GM10248 (cell line): ENCODE measurements at regions of chr11 and their contacts with region 1.

Region 1: DNA sequence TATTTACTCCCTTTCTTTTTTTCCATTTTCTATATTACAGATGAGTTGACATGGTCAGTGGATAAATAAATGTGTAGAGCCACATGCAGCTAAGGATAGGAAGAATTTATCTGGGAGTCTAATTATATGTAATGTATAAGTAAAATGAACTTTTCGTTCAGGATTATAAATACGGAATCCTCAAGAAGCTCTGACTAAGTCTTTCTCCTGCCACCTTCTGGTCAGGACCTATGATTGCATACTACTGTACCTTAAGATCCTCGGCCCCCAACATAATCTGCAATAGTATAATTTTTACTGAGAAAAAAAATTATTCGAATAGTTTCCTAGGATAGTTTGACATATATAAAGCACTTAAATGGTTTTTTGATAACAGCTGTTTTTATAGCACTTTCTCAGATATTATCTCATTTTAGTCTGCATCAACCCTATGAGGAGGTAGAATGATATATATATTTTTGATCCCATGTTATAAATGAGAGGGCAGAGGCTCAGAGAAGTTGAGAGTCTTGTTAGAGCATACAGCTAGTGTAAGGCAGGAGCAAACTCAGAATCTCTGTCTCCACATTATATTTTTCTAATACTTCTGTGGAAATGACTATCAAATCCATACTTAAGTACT is 36.1 kb downstream of the CCDC90B start:
- DNase-seq: peak; percentile 36
- CTCF ChIP-seq: peak; percentile 68

Region 2: GRCh38 chr11:82900277-82901164 is 349.6 kb before region 1 on chr11 and contains the start of gene PRCP:
- CTCF ChIA-PET with region 1: interaction called, 18 read pairs
- POLR2A ChIA-PET with region 1: no interaction called
- DNase-seq: peak; percentile 94
- CTCF ChIP-seq: no peak

Region 3: GRCh38 chr11:83205608-83206185 is 44.4 kb before region 1 on chr11:
- CTCF ChIA-PET with region 1: interaction called, 10 read pairs
- POLR2A ChIA-PET with region 1: no interaction called
- DNase-seq: no peak
- CTCF ChIP-seq: no peak

Region 4: GRCh38 chr11:83265331-83265730 is 15.2 kb after region 1 on chr11:
- CTCF ChIA-PET with region 1: interaction called, 34 read pairs
- POLR2A ChIA-PET with region 1: no interaction called
- DNase-seq: no peak
- CTCF ChIP-seq: no peak

Region 5: GRCh38 chr11:83292709-83293456 is 42.8 kb after region 1 on chr11:
- CTCF ChIA-PET with region 1: interaction called, 10 read pairs
- POLR2A ChIA-PET with region 1: no interaction called
- DNase-seq: peak; percentile 42
- CTCF ChIP-seq: peak; percentile 71